BJ (cell line): ENCODE measurements at regions of chr1 and their contacts with region 1.

Region 1: GRCh38 chr1:74689621-74690363 is 16.2 kb upstream of the ERICH3 start:
- DNase-seq: no peak
- H3K4me3 ChIP-seq: no peak overlapping the region
- H3K27me3 ChIP-seq: no peaks in the 10 kb centered on the region
- CTCF ChIP-seq: peak; percentile 75

Region 2: DNA sequence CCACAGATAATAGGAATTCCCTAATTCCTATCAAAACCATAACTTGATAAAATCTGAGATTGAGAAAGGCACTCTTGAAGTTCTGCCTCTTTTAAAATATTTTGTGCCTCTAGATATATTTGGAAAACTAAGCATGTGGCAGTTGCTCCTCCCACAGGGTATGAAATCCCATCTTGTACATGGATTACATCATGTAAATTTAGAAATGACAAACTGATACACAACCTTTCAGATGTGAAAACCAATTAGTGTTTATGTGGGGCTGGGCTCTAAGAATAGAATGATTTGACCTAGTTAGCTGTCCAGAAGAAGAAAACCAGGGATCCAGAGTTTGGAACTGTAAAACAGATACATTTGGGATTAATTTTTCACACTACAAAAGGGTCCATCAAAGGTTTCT is 193.1 kb before region 1 on chr1:
- CTCF ChIA-PET with region 1: no interaction called
- POLR2A ChIA-PET with region 1: no interaction called
- DNase-seq: no peak
- H3K4me3 ChIP-seq: no peak overlapping the region
- H3K27me3 ChIP-seq: no peaks in the 10 kb centered on the region
- CTCF ChIP-seq: no peak

Region 3: DNA sequence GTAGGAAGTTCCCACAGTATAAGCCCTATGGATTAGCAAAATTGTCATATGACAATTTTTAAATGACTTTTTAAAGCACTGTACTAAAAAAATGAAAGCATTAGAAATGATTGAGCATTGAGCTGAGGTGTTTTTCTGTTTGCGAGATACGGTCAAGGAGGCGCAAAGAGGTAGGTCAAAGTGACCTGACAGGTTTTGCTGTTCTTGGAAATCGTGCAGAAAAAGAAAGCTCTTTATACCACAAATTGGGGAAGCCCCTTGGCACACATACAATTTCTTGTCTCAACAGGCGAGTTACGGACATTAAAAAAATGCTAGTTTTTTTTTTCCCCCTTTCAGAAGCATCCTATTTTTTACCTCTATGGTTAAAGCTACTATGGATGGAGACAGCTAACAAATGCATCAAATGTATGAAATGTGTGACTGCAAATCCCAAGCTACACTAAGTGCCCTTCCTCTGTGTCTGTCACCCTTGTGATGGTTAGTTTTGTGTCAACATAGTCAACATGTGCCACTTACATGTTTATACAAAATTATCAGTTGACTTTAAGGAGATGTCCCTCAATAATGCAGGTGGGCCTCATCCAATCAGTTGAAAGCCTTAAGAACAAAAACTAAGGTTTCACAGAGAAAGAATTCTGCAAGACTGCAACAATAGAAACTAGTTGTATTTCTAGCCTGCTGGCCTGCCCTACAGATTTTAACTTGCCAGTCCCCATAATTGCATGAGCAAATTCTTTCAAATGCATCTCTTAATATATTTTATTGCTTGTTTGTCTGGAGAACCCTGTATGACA is 13.8 kb after region 1 on chr1:
- CTCF ChIA-PET with region 1: interaction called, 14 read pairs
- POLR2A ChIA-PET with region 1: no interaction called
- DNase-seq: no peak
- H3K4me3 ChIP-seq: no peak overlapping the region
- H3K27me3 ChIP-seq: no peaks in the 10 kb centered on the region
- CTCF ChIP-seq: no peak

Region 4: GRCh38 chr1:74835051-74835450 is 145.3 kb after region 1 on chr1:
- CTCF ChIA-PET with region 1: no interaction called
- POLR2A ChIA-PET with region 1: no interaction called
- DNase-seq: no peak
- H3K4me3 ChIP-seq: no peak overlapping the region
- H3K27me3 ChIP-seq: no peaks in the 10 kb centered on the region
- CTCF ChIP-seq: no peak